ENCODE measurements at regions of chr17 and their contacts with region 1.

Region 1: GRCh38 chr17:57671667-57672632 is 73.1 kb downstream of the CCDC182 start:
- DNase-seq: peak; percentile 92
- ATAC-seq: peak; percentile 99
- H3K4me3 Mint-ChIP-seq: no peak overlapping the region
- H3K27ac Mint-ChIP-seq: no peak overlapping the region
- H3K4me1 Mint-ChIP-seq: peaks cover 14% of the 10 kb centered on the region
- H3K27me3 Mint-ChIP-seq: no peaks in the 10 kb centered on the region
- CTCF ChIP-seq: peak; percentile 91

Region 2: GRCh38 chr17:57243171-57243948 is 428.6 kb before region 1 on chr17:
- CTCF ChIA-PET with region 1: interaction called, 28 read pairs
- POLR2A ChIA-PET with region 1: no interaction called
- DNase-seq: peak; percentile 83
- ATAC-seq: peak; percentile 92
- H3K4me3 Mint-ChIP-seq: no peak overlapping the region
- H3K27ac Mint-ChIP-seq: no peak overlapping the region
- H3K4me1 Mint-ChIP-seq: peaks cover 6% of the 10 kb centered on the region
- H3K27me3 Mint-ChIP-seq: no peaks in the 10 kb centered on the region; the same call in none of the 2 replicates
- CTCF ChIP-seq: peak; percentile 92

Region 3: GRCh38 chr17:57577751-57578607 is 94.0 kb before region 1 on chr17:
- CTCF ChIA-PET with region 1: interaction called, 10 read pairs
- POLR2A ChIA-PET with region 1: no interaction called
- DNase-seq: no peak
- ATAC-seq: peak; percentile 61
- H3K4me3 Mint-ChIP-seq: peak overlapping the region; percentile 20; the same call in 1 of the 2 replicates
- H3K27ac Mint-ChIP-seq: 0 out of 2 replicates have a peak overlapping the region, but pooled peaks have one; percentile 28
- H3K4me1 Mint-ChIP-seq: peaks cover 27% of the 10 kb centered on the region
- H3K27me3 Mint-ChIP-seq: no peaks in the 10 kb centered on the region
- CTCF ChIP-seq: no peak

Region 4: DNA sequence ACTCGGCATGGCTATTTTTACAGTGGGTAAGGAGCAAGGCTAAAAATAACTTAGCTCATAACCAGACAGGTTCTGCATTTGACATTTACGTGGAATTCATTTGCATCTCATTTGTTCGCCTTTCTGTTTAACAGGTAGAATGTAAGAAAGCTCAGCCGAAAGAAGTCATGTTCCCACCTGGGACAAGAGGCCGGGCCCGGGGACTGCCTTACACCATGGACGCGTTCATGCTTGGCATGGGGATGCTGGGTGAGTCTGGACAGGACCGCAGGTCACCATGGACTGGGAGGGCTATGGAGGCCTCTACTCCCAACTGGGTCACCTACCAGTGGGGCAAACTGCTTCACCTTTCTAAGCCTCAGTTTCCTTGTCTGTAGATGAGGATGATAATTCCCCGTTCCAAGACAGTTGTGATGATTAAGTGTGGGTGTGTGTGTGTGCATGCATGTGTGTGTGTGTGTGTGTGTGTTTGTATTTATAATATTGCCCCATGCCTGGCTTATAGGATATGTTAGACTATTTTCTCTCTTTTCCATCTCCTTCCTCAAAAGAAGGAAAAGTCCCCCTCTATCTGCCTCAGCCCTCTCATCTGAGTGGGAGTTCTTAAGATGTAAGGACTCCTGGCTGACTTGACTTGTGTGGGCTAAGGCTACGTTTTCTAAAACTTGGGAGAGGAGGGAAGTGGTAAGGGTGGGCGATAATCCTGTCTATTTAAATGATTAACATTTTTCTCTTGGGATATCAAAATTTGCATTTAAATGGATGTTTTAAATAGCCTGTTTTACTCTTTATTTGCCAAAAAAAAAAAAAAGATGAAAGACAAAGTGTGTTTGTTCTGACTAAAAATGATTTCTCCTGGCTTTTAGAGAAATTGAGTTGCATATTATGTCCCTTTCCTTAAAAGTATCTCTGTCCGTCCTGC is 55.9 kb before region 1 on chr17:
- CTCF ChIA-PET with region 1: interaction called, 12 read pairs
- POLR2A ChIA-PET with region 1: no interaction called
- DNase-seq: no peak
- ATAC-seq: no peak
- H3K4me3 Mint-ChIP-seq: no peak overlapping the region
- H3K27ac Mint-ChIP-seq: no peak overlapping the region
- H3K4me1 Mint-ChIP-seq: peaks cover 27% of the 10 kb centered on the region
- H3K27me3 Mint-ChIP-seq: no peaks in the 10 kb centered on the region
- CTCF ChIP-seq: no peak

Region 5: GRCh38 chr17:57685505-57686132 is 13.7 kb after region 1 on chr17:
- CTCF ChIA-PET with region 1: interaction called, 20 read pairs
- POLR2A ChIA-PET with region 1: no interaction called
- DNase-seq: no peak
- ATAC-seq: peak; percentile 66
- H3K4me3 Mint-ChIP-seq: no peak overlapping the region
- H3K27ac Mint-ChIP-seq: no peak overlapping the region
- H3K4me1 Mint-ChIP-seq: peaks cover 31% of the 10 kb centered on the region
- H3K27me3 Mint-ChIP-seq: no peaks in the 10 kb centered on the region
- CTCF ChIP-seq: no peak

Region 6: GRCh38 chr17:57747221-57748017 is 75.5 kb after region 1 on chr17:
- CTCF ChIA-PET with region 1: interaction called, 25 read pairs
- POLR2A ChIA-PET with region 1: no interaction called
- DNase-seq: no peak
- ATAC-seq: peak; percentile 79
- H3K4me3 Mint-ChIP-seq: no peak overlapping the region
- H3K27ac Mint-ChIP-seq: no peak overlapping the region
- H3K4me1 Mint-ChIP-seq: peaks cover 4% of the 10 kb centered on the region
- H3K27me3 Mint-ChIP-seq: no peaks in the 10 kb centered on the region; the same call in 1 of the 2 replicates
- CTCF ChIP-seq: peak; percentile 43

Measured in WTC11 (cell line).